ENCODE measurements at regions of chr11 and their contacts with region 1.

Region 1: DNA sequence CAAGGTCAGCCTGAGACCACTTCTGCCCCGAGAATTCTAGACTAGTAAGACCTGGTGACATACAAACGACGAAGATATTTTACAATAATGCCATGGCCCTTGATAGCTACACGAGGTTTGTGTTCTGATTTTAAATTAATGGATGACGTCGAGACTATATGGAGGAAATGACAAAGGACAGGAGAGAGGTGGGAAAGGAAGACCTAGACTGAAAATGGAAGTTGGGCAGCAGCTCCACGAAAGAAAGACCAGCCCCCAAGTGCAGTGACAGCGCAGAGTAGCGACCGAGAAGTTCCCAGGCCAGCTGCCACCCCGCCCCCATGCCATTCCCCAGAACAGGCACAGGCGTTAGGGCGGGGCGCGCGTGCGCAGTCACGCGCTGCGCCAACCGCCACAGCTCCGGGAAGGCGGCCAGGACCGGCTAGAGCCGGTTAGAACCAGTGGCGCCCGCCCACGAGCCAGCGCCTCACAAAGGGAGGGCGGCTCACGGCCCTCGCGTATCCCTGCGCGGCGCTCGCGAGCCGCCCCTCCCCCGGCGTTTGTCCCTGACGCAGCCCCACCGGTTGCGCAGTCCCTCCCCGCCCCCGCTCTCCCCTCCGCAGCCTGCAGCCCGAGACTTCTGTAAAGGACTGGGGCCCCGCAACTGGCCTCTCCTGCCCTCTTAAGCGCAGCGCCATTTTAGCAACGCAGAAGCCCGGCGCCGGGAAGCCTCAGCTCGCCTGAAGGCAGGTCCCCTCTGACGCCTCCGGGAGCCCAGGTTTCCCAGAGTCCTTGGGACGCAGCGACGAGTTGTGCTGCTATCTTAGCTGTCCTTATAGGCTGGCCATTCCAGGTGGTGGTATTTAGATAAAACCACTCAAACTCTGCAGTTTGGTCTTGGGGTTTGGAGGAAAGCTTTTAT is 1.5 kb upstream of the MALAT1 start:
- DNase-seq: peak; percentile 87
- CTCF ChIP-seq: no peak

Region 2: GRCh38 chr11:65180877-65181568 is 316.4 kb before region 1 on chr11:
- in situ Hi-C with region 1: no loop called
- DNase-seq: peak; percentile 82
- CTCF ChIP-seq: peak; percentile 84

Region 3: DNA sequence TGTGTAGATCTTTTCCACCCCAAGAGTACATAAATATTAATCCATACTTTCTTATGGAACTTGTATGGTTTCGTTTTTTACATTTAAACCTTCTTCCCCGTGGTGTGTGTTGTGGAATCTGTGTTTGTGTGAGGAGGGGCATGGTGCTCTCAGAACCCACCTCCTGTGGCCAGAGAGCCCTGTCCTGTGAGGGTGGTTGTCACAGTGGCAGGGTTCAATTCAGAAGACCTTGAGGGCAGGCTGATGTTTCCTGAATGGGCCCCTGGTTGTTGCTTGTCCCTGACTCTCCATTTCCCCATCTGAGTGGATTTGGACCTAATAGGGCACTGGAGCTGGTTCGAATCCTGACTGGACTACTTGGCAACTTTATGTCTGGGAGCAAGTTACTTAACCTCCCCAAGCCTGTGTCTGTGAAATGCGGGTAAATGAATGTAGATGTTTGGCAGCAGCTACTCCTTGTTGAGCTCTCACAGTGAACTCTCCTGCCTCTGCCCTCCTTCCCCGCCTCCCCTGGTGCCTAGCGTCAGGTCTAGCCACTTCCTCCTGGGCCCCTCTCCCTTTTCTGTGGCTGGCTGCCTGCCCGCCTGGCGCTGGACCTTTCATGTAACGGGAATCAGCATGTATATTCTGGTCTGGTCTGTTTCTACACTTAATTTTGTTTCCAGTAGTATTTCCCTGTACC is 67.5 kb before region 1 on chr11:
- in situ Hi-C with region 1: loop called (anchors 5 kb)
- DNase-seq: no peak
- CTCF ChIP-seq: no peak

Measured in GM13976 (cell line).